ENCODE measurements at regions of chr15 and their contacts with region 1.

Region 1: GRCh38 chr15:40098489-40099261 is 10.0 kb downstream of the BMF start:
- DNase-seq: peak; percentile 90
- ATAC-seq: peak; percentile 88
- H3K4me3 ChIP-seq: peak overlapping the region; percentile 48; the same call in 1 of the 2 replicates
- H3K27ac ChIP-seq: peak overlapping the region; percentile 92
- H3K4me1 ChIP-seq: peaks cover 75% of the 10 kb centered on the region
- H3K27me3 ChIP-seq: no peaks in the 10 kb centered on the region
- CTCF ChIP-seq: no peak

Region 2: DNA sequence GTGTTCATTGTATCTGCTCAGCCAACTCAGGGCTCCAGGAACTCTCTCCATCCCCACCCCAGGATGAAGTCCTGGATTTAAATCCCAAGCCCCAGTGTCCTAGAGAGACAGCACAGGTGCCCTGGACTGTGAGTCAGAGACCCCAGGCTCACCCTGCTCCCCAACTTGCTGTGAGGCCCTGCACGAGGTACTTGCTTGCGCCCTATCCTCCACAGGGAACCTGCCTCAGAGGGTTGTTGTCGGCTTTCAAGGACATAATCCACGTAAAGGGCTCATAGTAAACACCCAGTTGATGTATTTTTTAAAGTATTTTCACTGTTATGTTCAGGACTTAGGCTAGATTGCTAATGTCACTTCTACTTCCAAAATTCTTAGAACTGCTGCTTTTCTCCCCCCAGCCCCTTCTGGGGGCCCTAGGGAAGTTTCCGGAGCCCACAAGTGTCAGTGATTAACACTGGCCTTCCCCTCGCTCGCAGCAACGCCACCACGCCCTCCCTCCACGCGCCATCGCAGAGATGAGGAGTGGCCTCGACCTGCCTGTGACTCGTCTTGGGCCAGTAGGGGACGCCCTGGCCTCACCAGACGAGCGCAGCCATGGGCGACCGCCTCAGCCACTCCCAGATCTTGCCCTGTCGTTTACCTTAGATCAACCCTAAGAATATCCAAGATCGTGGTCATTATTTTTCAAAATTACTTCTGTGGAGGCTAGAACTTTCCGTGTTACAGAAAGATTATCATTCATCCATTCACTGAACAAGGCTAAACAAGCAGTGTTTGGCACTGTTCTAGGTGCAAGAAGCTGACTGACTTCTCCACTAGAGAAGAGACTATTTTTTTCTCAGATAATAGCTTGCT is 53.7 kb before region 1 on chr15:
- CTCF ChIA-PET with region 1: interaction called, 3 read pairs
- POLR2A ChIA-PET with region 1: no interaction called
- intact Hi-C with region 1: loop called (anchors 1 kb)
- DNase-seq: peak; percentile 88
- ATAC-seq: peak; percentile 91
- H3K4me3 ChIP-seq: peak overlapping the region; percentile 57
- H3K27ac ChIP-seq: peak overlapping the region; percentile 12; the same call in 1 of the 2 replicates
- H3K4me1 ChIP-seq: peaks cover 39% of the 10 kb centered on the region
- H3K27me3 ChIP-seq: no peaks in the 10 kb centered on the region
- CTCF ChIP-seq: peak; percentile 99

Region 3: DNA sequence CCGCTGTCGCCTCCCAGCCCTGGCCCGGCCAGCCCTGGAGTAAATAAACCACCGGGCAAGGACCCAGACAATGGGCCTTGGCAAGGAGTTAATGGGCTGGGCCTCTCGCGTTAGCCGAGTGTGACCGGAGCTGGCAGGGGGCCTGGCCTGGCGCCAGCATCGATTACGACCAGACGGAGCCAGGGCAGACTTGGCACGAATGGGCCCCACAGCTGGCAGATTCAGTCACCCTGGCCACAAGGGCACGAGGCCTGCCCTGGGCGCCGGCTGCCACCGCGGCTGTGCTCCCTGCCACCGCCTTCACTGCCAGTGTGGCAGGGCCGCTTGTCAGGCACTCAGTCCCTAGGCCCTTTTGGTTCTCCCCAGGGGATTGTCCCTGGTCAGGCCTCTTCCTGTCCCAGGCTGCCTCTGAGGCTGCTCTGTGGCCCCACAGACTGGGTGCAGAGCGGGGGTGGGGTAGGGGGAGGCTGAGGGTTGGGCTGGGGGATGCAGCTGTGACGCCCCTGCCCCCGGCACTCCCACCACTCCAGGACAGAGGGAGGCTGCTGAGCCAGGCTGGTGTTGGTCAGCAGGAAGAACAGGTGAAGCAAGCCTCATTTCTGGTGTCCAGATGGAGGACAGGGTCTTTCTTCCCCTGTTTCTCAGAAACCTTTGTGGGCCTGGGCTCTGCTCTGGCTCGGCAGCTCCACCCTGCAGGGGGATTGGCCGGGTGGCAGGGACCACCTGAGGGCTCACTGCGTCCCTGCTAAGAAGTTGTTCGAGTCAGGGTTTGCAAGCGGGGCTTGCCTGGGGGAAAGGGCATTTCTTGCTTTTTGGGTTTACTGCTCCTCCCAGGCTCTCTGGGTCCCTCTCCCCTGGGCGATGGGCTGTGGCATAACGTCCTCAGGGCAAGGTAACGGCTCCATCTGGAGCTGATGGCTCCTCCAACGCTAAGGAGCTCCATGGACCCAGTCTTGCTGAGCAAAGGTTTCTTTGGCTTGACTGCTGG is 29.2 kb before region 1 on chr15:
- CTCF ChIA-PET with region 1: no interaction called
- POLR2A ChIA-PET with region 1: no interaction called
- intact Hi-C with region 1: loop called (anchors 1 kb)
- DNase-seq: peak; percentile 97
- ATAC-seq: peak; percentile 85
- H3K4me3 ChIP-seq: no peak overlapping the region
- H3K27ac ChIP-seq: peak overlapping the region; percentile 41
- H3K4me1 ChIP-seq: peaks cover 41% of the 10 kb centered on the region
- H3K27me3 ChIP-seq: no peaks in the 10 kb centered on the region
- CTCF ChIP-seq: no peak

Region 4: GRCh38 chr15:40081691-40082194 is 16.9 kb before region 1 on chr15:
- CTCF ChIA-PET with region 1: no interaction called
- POLR2A ChIA-PET with region 1: no interaction called
- intact Hi-C with region 1: loop called (anchors 2 kb)
- DNase-seq: peak; percentile 51
- ATAC-seq: peak; percentile 92
- H3K4me3 ChIP-seq: peak overlapping the region; percentile 49
- H3K27ac ChIP-seq: no peak overlapping the region
- H3K4me1 ChIP-seq: peaks cover 24% of the 10 kb centered on the region
- H3K27me3 ChIP-seq: no peaks in the 10 kb centered on the region
- CTCF ChIP-seq: no peak

Region 5: DNA sequence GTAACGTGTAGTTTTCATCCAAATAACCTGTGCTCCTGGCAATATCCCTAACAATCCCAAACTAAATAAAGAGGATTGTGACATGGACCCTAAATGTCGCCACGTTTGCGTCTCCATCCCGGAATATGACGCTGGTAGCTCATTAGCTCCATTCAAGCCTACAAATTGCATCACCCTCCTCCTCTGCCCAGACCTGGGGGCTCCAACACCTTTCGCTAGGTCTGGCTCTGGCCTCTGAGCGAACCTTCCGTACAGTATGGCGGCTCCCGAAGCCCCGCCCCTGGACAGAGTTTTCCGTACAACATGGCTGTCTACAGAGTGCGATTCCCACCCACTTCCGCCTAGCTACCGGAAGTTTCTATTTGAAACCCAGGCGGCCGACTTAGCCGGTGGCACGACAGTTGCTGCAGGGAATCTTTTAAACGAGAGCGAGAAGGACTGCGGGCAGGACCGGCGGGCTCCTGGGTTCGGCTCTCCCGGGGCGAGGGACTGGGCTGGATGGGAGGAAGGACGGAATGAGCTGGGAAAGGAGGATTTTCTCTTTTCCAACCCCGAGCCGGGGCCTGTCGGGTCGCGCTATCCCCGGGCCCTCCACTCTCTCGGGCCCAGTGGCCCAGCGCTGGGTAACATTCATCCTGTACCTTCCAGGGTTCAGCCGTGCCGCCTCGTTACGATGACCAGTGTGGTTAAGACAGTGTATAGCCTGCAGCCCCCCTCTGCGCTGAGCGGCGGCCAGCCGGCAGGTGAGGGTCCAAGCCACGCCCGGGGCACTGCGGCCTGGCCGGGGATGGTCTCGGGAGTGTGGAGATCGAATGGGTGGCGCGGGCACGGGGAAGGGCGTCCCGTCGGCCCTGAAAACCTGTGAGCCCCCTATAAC is 284.1 kb after region 1 on chr15 and contains the start of gene KNSTRN:
- CTCF ChIA-PET with region 1: no interaction called
- POLR2A ChIA-PET with region 1: interaction called, 12 read pairs
- intact Hi-C with region 1: no loop called
- DNase-seq: peak; percentile 96
- ATAC-seq: peak; percentile 75
- H3K4me3 ChIP-seq: peak within 1 kb of the TSS; percentile 91
- H3K27ac ChIP-seq: peak within 1 kb of the TSS; percentile 19
- H3K4me1 ChIP-seq: peaks cover 35% of the 10 kb centered on the region
- H3K27me3 ChIP-seq: no peaks in the 10 kb centered on the region
- CTCF ChIP-seq: no peak
- total RNA-seq, gene KNSTRN: 115 and 125 TPM in 2 replicates

Measured in PC-3 (cell line).